ENCODE measurements at regions of chr7 and their contacts with region 1.

Region 1: GRCh38 chr7:126803060-126803665 is 449.6 kb downstream of the GRM8 start:
- DNase-seq: peak; percentile 58 to 77 (median 74)
- ATAC-seq: peak; percentile 98
- H3K4me3 ChIP-seq: no peak overlapping the region
- H3K27ac ChIP-seq: no peak overlapping the region
- H3K4me1 ChIP-seq: no peaks in the 10 kb centered on the region
- H3K27me3 ChIP-seq: no peaks in the 10 kb centered on the region
- CTCF ChIP-seq: peak; percentile 61 to 81 (median 67)
- EP300 ChIP-seq: no peak
- POLR2A ChIP-seq: no peak
- RAD21 ChIP-seq: peak; percentile 77 to 85

Region 2: GRCh38 chr7:127253281-127254162 is 450.4 kb after region 1 on chr7:
- CTCF ChIA-PET with region 1: interaction called, 3 read pairs
- POLR2A ChIA-PET with region 1: no interaction called
- in situ Hi-C with region 1: no loop called
- intact Hi-C with region 1: loop called (anchors 1 kb)
- DNase-seq: peak; percentile 84 to 87 (median 86)
- ATAC-seq: peak; percentile 95
- H3K4me3 ChIP-seq: peak overlapping the region; percentile 53
- H3K27ac ChIP-seq: no peak overlapping the region
- H3K4me1 ChIP-seq: peaks cover 0 to 25% of the 10 kb centered on the region in 2 experiments; a peak in 4 of 5 replicates
- H3K27me3 ChIP-seq: peaks cover 15 to 44% of the 10 kb centered on the region in 2 experiments; a peak in 4 of 5 replicates
- CTCF ChIP-seq: peak; percentile 81 to 93 (median 90)
- EP300 ChIP-seq: no peak
- POLR2A ChIP-seq: no peak
- RAD21 ChIP-seq: peak; percentile 72 to 76

Region 3: GRCh38 chr7:127404286-127405072 is 601.3 kb after region 1 on chr7:
- CTCF ChIA-PET with region 1: no interaction called
- POLR2A ChIA-PET with region 1: no interaction called
- in situ Hi-C with region 1: no loop called
- intact Hi-C with region 1: loop called (anchors 10 kb)
- DNase-seq: no peak
- ATAC-seq: no peak
- H3K4me3 ChIP-seq: no peak overlapping the region
- H3K27ac ChIP-seq: no peak overlapping the region
- H3K4me1 ChIP-seq: no peaks in the 10 kb centered on the region
- H3K27me3 ChIP-seq: peaks cover 3 to 7% of the 10 kb centered on the region in 2 experiments; a peak in 2 of 5 replicates
- CTCF ChIP-seq: no peak
- EP300 ChIP-seq: no peak
- POLR2A ChIP-seq: no peak
- RAD21 ChIP-seq: no peak

Region 4: DNA sequence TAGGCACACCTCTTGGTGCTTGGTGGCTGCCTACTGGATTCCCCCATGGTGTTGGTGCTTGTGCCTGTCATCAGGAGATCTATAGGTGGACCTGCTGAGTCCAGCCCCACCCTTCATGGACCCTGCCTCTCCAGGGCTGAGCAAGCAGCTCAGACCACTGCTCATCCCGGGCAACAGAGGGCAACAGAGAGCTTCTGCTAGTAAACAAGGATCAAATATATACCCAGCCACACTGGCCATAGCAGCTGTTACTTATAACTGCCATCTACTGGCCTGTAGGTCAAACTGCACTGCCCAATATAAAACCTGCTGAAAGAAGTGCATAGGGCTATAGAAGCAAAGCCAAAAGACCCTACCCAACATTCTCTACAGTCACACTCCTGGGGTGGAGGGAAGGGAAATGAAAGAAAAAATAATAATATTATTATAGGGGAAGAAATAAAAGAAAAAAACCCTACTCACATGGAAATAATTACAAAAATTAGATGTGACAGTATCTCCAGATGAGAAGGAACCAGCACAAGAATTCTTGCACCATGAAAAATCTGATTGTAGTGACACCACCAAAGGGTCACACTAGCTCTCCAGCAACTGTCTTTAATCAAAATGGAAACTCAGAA is 644.3 kb after region 1 on chr7:
- CTCF ChIA-PET with region 1: no interaction called
- POLR2A ChIA-PET with region 1: no interaction called
- in situ Hi-C with region 1: no loop called
- intact Hi-C with region 1: loop called (anchors 10 kb)
- DNase-seq: peak; percentile 74 to 85 (median 75)
- ATAC-seq: peak; percentile 100
- H3K4me3 ChIP-seq: no peak overlapping the region
- H3K27ac ChIP-seq: no peak overlapping the region
- H3K4me1 ChIP-seq: no peaks in the 10 kb centered on the region
- H3K27me3 ChIP-seq: peaks cover 4 to 9% of the 10 kb centered on the region in 2 experiments; a peak in 3 of 5 replicates
- CTCF ChIP-seq: peak; percentile 96 to 99 (median 99)
- EP300 ChIP-seq: no peak
- POLR2A ChIP-seq: no peak
- RAD21 ChIP-seq: peak; percentile 78 to 94

Region 5: DNA sequence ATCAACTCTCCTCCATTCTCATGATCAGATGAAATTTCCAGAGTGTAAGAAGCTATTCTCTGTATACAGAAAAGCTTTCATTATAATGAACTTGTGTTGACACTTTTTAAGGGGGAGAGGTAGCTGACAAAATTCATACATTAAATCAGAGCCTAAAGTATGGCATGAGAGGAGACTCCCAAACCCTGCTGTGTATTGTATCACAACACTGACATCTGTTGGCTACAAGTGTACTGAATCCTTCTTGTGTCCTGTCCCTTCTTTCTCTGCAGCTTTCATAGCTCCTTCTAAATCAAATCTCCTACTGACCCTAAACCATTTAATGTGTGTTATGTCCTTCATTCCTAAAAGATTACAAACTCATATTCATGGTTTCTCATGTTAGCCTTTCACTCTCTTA is 711.3 kb after region 1 on chr7:
- CTCF ChIA-PET with region 1: interaction called, 3 read pairs
- POLR2A ChIA-PET with region 1: no interaction called
- in situ Hi-C with region 1: no loop called
- intact Hi-C with region 1: loop called (anchors 1 kb)
- DNase-seq: peak in 2 of 4 experiments; percentile 44 to 48
- ATAC-seq: peak; percentile 89
- H3K4me3 ChIP-seq: no peak overlapping the region
- H3K27ac ChIP-seq: no peak overlapping the region
- H3K4me1 ChIP-seq: no peaks in the 10 kb centered on the region; a peak in 1 of 5 replicates
- H3K27me3 ChIP-seq: peaks cover 2 to 8% of the 10 kb centered on the region in 2 experiments
- CTCF ChIP-seq: peak; percentile 40 to 66 (median 62); a peak in 5 of 6 replicates
- EP300 ChIP-seq: no peak
- POLR2A ChIP-seq: no peak
- RAD21 ChIP-seq: peak; percentile 62 to 77